GM18951 (cell line): ENCODE measurements at regions of chr13 and their contacts with region 1.

Region 1: GRCh38 chr13:49606747-49607648 is 21.3 kb upstream of the ARL11 start:
- POLR2A ChIP-seq: no peak

Region 2: GRCh38 chr13:49300739-49301589 is 306.0 kb before region 1 on chr13:
- in situ Hi-C with region 1: loop called (anchors 10 kb)
- POLR2A ChIP-seq: no peak

Region 3: GRCh38 chr13:49421391-49421790 is 185.6 kb before region 1 on chr13:
- in situ Hi-C with region 1: loop called (anchors 10 kb)
- POLR2A ChIP-seq: no peak

Region 4: DNA sequence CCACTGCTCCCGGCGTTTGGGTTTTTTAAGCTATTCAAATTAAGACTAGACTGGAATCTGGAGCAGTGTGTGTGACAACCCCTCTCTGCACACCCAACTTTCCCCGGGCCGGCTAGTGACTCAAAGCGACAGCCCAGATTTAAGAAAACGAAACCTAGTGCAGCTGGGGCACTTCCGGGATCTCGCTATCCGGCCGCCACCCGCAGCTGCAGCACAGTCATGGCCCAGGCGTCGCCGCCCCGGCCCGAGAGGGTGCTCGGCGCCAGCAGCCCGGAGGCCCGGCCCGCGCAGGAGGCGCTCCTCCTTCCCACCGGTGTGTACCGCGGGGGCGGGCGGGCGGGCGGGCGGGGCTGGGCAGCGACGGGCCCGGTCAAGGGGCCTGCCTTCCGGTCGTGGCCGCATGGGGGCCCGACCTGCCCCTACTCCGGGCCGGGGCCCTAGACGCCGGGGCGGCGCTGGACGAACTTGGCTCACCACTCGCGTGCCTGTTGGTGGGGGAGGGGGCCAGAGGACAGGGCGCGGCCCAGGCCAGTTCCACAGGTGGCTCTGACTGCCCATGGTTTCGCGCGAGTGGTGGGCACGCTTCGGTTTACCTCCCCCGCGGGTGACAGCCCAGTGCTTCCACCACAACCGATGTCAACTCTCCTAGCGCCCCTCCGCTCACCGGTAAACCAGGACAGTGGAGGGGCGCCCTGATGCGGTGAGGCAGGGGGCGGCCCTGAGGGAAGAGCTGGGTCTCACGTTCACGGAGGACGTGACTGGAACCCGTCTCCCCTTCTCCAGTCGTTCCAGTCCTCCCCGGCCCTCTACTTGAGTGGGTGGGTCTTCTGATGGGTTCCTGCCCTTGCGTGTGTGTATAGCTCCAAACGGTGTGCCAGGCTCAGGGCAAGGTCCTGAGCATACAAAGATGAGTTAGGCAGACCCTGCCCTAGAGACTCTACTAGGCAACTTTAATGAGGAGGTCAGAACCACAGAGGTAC is 110.9 kb before region 1 on chr13 and contains the start of gene PHF11:
- in situ Hi-C with region 1: loop called (anchors 10 kb)
- POLR2A ChIP-seq: peak; percentile 76